ENCODE measurements at regions of chr13 and their contacts with region 1.

Region 1: GRCh38 chr13:95191821-95192563 is 109.3 kb downstream of the ABCC4 start:
- DNase-seq: peak; percentile 56 to 79
- ATAC-seq: peak; percentile 80 to 95 (median 90)
- H3K4me3 ChIP-seq: no peak overlapping the region
- H3K27ac ChIP-seq: no peak overlapping the region
- H3K4me1 ChIP-seq: peaks cover 0 to 3% (median 0%) of the 10 kb centered on the region in 9 donors
- H3K27me3 ChIP-seq: no peaks in the 10 kb centered on the region
- CTCF ChIP-seq: peak; percentile 68 to 93 (median 84)

Region 2: DNA sequence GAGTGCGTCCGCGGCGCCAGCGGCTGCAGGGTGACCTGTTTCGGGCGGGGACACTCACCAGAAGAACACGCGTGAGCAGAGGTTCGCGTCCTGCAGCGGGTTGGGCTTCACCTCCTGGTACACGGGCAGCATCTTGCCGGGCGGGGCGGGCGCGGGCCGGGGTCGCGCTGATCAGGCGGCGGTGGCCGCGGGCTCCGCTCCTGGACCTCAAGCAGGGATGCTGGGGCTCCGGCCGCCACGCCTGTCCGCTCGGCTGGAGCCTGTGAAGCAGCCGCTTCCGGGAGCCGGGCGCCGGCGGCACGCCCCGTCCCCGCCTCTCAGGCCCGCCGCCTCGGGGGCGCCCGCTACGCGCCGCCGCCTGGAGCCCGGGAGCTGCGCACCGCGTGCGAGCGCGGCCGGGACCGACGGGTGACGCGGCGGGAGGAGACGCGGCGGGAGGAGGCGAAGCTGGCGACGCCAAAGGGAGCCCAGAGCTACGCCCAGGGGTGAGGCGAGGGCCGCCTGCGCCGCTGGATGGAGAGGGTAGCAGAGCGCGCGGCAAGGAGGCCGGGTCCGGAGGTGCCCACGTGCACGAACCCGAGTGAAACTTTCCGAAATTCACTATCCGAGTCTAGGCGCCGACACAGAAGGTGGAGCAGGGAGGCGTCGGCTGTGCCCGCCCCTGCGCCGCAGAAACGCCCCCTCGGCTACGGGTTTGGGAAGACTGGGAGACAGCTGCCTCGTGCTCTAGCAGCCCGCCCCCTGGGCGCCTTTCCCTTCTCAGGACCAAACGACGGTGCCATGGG is 109.4 kb after region 1 on chr13 and contains the start of gene ABCC4:
- intact Hi-C with region 1: loop called in 7 of 10 experiments (anchors 5 to 10 kb)
- DNase-seq: peak; percentile 57 to 69
- ATAC-seq: peak; percentile 74 to 94 (median 85)
- H3K4me3 ChIP-seq: peak within 1 kb of the TSS; percentile 42 to 89 (median 75)
- H3K27ac ChIP-seq: peak within 1 kb of the TSS; percentile 57 to 92 (median 76)
- H3K4me1 ChIP-seq: peaks cover 0 to 41% (median 22%) of the 10 kb centered on the region in 9 donors
- H3K27me3 ChIP-seq: peaks cover 0 to 10% (median 0%) of the 10 kb centered on the region in 7 donors
- CTCF ChIP-seq: no peak
- total RNA-seq, gene ABCC4: 2.3 to 6.7 (median 4.1) TPM

Region 3: DNA sequence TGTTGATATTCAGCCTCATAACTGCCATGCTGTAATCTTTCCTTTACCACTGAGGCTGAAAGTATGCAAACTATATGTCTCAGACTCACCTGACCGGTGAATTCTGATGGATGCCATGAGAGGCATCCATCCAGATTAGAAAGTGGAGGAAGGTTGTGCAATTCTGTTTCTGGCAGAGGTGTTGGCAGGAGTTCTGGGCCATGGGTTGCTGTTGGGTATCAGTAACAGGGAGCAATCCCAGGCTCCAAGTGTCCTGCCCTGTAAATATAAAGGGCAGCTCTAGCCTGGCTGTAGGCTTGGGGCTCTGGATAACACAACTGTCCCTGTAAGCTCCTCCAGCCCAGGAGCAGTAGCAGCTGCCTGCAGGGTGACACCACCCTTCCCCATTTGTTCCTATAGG is 186.6 kb after region 1 on chr13:
- intact Hi-C with region 1: loop called in 8 of 10 experiments (anchors 2 to 5 kb)
- DNase-seq: peak; percentile 11 to 48
- ATAC-seq: peak; percentile 46 to 86 (median 72)
- H3K4me3 ChIP-seq: no peak overlapping the region
- H3K27ac ChIP-seq: peak overlapping the region in 3 of 10 donors; percentile 10 to 48 (median 17)
- H3K4me1 ChIP-seq: peaks cover 3 to 19% (median 8%) of the 10 kb centered on the region in 9 donors
- H3K27me3 ChIP-seq: peaks cover 0 to 2% (median 0%) of the 10 kb centered on the region in 7 donors
- CTCF ChIP-seq: no peak

Region 4: GRCh38 chr13:95385808-95386207 is 193.8 kb after region 1 on chr13:
- intact Hi-C with region 1: loop called in 7 of 10 experiments (anchors 2 to 5 kb)
- DNase-seq: no peak
- ATAC-seq: no peak
- H3K4me3 ChIP-seq: no peak overlapping the region
- H3K27ac ChIP-seq: no peak overlapping the region
- H3K4me1 ChIP-seq: peaks cover 0 to 20% (median 10%) of the 10 kb centered on the region in 9 donors
- H3K27me3 ChIP-seq: peaks cover 0 to 12% (median 0%) of the 10 kb centered on the region in 7 donors
- CTCF ChIP-seq: no peak

Region 5: GRCh38 chr13:95403828-95404522 is 212.0 kb after region 1 on chr13:
- intact Hi-C with region 1: loop called (anchors 1 to 5 kb)
- DNase-seq: peak; percentile 82 to 83
- ATAC-seq: peak; percentile 88 to 96 (median 92)
- H3K4me3 ChIP-seq: peak overlapping the region in 9 of 10 donors; percentile 17 to 55 (median 45)
- H3K27ac ChIP-seq: no peak overlapping the region
- H3K4me1 ChIP-seq: peaks cover 0 to 9% (median 7%) of the 10 kb centered on the region in 9 donors
- H3K27me3 ChIP-seq: peaks cover 0 to 6% (median 0%) of the 10 kb centered on the region in 7 donors
- CTCF ChIP-seq: peak; percentile 90 to 97 (median 95)

Region 6: DNA sequence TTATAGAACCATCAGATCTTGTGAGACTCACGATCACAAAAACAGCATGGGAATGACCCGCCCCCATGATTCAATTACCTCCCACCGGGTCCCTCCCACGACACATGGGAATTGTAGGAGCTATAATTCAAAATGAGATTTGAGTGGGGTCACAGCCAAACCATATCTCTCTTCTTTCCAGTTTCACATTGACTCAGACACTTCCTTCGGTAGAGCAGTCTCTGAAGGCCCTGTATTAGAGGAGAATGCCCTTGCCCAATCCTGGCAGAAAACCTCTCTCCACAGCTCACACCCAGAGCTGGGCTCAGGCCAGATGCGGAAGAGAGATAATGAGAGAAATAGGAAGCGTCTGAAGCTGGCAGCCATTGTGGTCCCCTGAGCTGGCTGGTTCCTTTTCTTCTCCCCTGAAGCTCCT is 288.1 kb after region 1 on chr13:
- intact Hi-C with region 1: loop called in 8 of 10 experiments (anchors 1 to 10 kb)
- DNase-seq: peak in 1 of 2 donors; percentile 5
- ATAC-seq: peak in 5 of 8 donors; percentile 24 to 45 (median 36)
- H3K4me3 ChIP-seq: no peak overlapping the region
- H3K27ac ChIP-seq: peak overlapping the region in 1 of 10 donors; percentile 59
- H3K4me1 ChIP-seq: peaks cover 0 to 19% (median 0%) of the 10 kb centered on the region in 9 donors
- H3K27me3 ChIP-seq: peaks cover 0 to 5% (median 0%) of the 10 kb centered on the region in 7 donors
- CTCF ChIP-seq: no peak

Region 7: DNA sequence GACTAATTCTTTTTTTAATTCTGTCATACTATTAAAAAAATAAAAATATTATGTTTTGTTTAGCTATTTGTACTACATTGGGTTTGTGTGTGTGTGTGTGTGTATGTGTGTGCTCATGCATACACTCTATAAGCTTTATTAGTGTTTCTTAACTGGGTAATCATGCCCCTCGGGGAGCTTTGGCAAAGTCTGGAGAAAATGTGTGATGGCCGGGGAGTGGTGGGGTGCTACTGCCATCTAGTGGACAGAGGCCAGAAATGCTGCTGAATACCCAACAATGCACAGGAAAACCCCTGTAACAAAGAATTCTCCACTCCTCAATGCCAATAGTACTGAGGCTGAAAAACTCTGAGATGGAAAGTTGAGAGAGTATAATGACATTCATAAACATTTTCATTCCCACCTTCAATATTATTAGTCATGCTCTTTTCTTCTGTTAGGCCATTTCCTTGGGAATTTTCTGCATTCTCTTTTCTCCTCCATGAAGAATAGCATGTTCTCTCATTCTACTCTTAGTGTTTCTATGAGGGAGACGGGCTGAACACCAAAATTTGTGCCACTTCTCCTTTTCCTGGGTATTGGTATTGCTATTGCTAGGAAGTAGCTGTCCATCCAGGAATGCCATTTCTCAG is 642.3 kb after region 1 on chr13:
- intact Hi-C with region 1: loop called in 6 of 10 experiments (anchors 5 to 10 kb)
- DNase-seq: peak; percentile 40 to 44
- ATAC-seq: peak in 7 of 8 donors; percentile 64 to 87 (median 73)
- H3K4me3 ChIP-seq: no peak overlapping the region
- H3K27ac ChIP-seq: no peak overlapping the region
- H3K4me1 ChIP-seq: peaks cover 0 to 8% (median 6%) of the 10 kb centered on the region in 9 donors
- H3K27me3 ChIP-seq: no peaks in the 10 kb centered on the region
- CTCF ChIP-seq: peak; percentile 82 to 96 (median 93)